ENCODE measurements at regions of chr1 and their contacts with region 1.

Region 1: DNA sequence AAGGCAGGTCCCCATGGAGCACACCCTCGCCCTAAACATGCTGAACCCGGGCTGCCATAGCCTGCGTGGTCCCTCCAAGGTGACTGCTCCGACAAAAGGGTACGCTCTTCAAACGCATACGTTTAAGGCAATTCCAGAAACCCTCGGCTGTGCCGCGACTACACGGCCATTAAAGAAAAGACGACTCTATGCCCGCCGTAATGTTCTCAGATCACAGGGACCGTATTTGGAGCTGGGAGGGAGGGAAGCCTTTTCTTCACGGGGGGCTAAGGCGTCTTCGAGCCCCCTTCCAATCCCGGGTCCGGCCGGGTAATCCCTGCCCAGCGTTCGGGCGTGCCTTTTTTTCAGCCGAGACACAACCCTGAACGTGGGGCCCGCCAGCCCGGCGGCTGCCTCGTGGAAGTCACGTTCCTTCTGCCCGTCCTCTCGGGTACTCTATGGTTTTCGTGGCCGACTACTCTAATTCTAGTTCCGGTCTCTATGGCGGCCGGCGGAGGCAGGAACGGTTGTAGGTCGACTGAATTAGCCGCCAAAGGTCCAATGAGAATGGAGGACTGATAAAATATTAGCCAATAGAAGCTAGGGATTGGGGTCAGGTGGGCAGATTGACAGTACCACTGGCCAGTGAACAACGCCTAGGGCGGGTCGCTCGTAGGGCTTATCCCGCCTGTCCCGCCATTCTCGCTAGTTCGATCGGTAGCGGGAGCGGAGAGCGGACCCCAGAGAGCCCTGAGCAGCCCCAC is at the start of gene YBX1:
- DNase-seq: peak; percentile 97
- H3K4me3 ChIP-seq: peak within 1 kb of the TSS; percentile 76 to 97 (median 92)
- H3K27ac ChIP-seq: peak within 1 kb of the TSS; percentile 92 to 98 (median 97)
- H3K4me1 ChIP-seq: peaks cover 40 to 59% (median 54%) of the 10 kb centered on the region in 6 donors
- H3K27me3 ChIP-seq: no peaks in the 10 kb centered on the region
- CTCF ChIP-seq: peak in 4 of 11 experiments; percentile 13 to 41 (median 20)
- POLR2A ChIP-seq: peak; percentile 12 to 81 (median 73)
- total RNA-seq, gene YBX1: 361 to 451 (median 396) TPM

Region 2: DNA sequence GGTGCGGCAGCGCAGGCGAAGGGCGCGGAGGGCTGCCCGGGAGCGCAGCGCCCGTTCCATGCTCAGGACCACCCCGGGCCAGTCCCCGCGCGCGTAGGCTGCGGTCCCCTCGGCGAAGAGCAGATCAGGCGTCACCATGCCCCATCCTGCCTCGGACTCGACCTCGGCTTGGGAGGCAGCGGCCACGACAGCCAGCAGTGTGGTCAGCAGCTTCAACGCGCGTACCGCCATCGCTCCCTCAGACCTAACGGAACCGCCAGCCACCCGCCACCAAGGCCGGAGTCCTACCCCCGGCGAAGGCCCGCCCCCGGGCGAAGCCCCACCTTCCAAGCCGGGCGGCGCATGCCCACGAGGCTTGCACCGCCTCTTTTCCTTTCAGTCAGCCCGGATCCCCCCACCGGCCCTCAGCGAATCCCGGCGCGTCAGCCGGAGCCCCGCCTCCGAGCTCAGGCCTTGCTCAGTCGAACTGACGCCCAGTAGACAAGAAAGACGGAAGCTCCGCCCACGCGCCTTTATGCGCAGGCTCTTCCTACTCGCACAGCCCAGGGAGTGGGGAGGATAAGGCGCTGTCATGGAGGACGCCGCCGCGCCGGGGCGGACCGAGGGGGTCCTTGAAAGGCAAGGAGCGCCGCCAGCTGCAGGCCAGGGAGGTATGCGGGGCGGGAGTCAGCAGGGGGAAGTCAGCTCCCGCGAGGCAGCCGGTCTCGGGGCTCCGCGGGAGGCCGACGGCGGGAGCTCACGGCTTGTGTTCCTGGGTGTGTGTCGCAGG is 85.0 kb after region 1 on chr1 and contains the starts of genes C1orf50 and P3H1:
- intact Hi-C with region 1: loop called (anchors 10 kb)
- DNase-seq: peak; percentile 100
- H3K4me3 ChIP-seq: peak within 1 kb of the TSS; percentile 75 to 99 (median 94)
- H3K27ac ChIP-seq: peak within 1 kb of the TSS; percentile 83 to 95 (median 91)
- H3K4me1 ChIP-seq: peaks cover 27 to 90% (median 54%) of the 10 kb centered on the region in 6 donors
- H3K27me3 ChIP-seq: no peaks in the 10 kb centered on the region
- CTCF ChIP-seq: peak in 4 of 11 experiments; percentile 23 to 37 (median 28)
- POLR2A ChIP-seq: peak; percentile 8 to 94 (median 90)
- total RNA-seq, gene C1orf50: 3.1 to 9.8 (median 5.1) TPM
- total RNA-seq, gene P3H1: 38.4 to 55.8 (median 41.5) TPM

Measured in spleen (tissue), 13 donors.